ENCODE measurements at regions of chrX and their contacts with region 1.

Region 1: DNA sequence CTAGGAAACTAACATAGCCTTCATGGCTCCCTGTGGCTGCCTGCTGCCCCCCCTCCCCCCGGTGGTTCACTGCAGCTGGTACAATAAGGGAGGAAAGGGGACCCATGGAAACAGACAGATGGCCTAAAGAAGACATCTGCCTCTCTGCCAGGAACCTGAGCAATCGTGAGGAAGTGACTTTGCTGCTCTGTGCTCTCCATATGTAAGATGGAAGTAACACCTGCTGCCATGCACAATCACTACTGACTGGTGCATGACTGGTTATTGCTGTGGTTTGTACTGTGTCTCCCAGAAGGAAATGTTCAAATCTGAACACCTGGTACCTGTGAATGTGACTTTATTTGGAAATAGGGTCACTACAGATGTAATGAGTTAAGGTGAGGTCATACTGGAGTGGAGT is 43.6 kb downstream of the CD99L2 start:
- DNase-seq: peak; percentile 29
- H3K4me3 ChIP-seq: no peak overlapping the region
- H3K27ac ChIP-seq: peak overlapping the region; percentile 61
- H3K4me1 ChIP-seq: peaks cover 31% of the 10 kb centered on the region
- H3K27me3 ChIP-seq: no peaks in the 10 kb centered on the region
- CTCF ChIP-seq: no peak

Region 2: GRCh38 chrX:150813922-150814321 is 40.9 kb before region 1 on chrX:
- CTCF ChIA-PET with region 1: no interaction called
- dilution Hi-C with region 1: no loop called
- in situ Hi-C with region 1: no loop called
- intact Hi-C with region 1: no loop called
- DNase-seq: no peak
- H3K4me3 ChIP-seq: no peak overlapping the region
- H3K27ac ChIP-seq: no peak overlapping the region
- H3K4me1 ChIP-seq: no peaks in the 10 kb centered on the region
- H3K27me3 ChIP-seq: no peaks in the 10 kb centered on the region
- CTCF ChIP-seq: no peak

Region 3: DNA sequence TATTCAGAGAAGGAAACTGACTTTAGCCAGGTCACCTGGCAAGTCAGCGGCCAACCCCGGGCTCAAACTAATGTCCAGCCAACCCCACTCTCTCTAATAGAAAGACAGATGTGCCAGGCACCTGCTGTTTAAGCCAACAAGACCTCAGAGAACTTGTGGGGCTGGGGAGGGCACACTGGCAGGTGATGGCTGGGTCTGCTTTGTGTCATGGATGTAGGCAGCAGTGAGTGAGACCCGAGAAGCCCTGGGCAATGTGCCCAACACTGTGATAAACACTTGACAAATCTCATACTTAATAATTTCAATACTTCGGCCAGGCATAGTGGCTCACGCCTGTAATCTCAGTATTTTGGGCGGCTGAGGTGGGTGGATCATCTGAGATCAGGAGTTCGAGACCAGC is 52.6 kb after region 1 on chrX:
- CTCF ChIA-PET with region 1: no interaction called
- dilution Hi-C with region 1: loop called (anchors 5 kb)
- in situ Hi-C with region 1: no loop called
- intact Hi-C with region 1: no loop called
- DNase-seq: no peak
- H3K4me3 ChIP-seq: no peak overlapping the region
- H3K27ac ChIP-seq: no peak overlapping the region
- H3K4me1 ChIP-seq: no peaks in the 10 kb centered on the region
- H3K27me3 ChIP-seq: no peaks in the 10 kb centered on the region
- CTCF ChIP-seq: no peak